Dendritic cell treated with granulocyte-macrophage colony-stimulating factor and Interleukin-4, amounts not matched to agents 40 ng/mL and 50 ng/mL, for 4 days (primary cell): ENCODE measurements at regions of chr19 and their contacts with region 1.

Region 1: GRCh38 chr19:5031231-5032100 is 62.6 kb downstream of the KDM4B start:
- H3K4me3 Mint-ChIP-seq: no peak overlapping the region
- H3K27ac Mint-ChIP-seq: no peak overlapping the region
- H3K4me1 Mint-ChIP-seq: peaks cover 31% of the 10 kb centered on the region
- H3K27me3 Mint-ChIP-seq: no peaks in the 10 kb centered on the region

Region 2: DNA sequence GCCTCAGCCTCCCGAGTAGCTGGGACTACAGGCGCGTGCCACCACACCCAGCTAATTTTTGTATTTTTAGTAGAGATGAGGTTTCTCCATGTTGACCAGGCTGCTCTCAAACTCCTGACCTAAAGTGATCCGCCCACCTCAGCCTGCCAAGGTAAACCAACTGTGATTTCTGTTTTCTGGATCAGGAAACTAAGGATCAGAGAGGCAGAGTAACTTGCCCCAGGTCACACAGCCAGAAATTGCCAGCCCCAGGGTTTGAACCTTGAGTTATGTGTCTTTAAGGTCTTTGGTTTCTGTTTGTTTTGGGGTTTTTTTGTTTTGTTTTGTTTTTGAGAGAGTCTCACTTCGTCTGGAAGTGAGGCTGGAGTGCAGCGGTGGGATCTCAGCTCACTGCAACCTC is 159.8 kb before region 1 on chr19:
- intact Hi-C with region 1: loop called (anchors 1 kb)
- H3K4me3 Mint-ChIP-seq: no peak overlapping the region
- H3K27ac Mint-ChIP-seq: peak overlapping the region; percentile 65
- H3K4me1 Mint-ChIP-seq: peaks cover 50% of the 10 kb centered on the region
- H3K27me3 Mint-ChIP-seq: no peaks in the 10 kb centered on the region

Region 3: GRCh38 chr19:4976401-4977298 is 54.8 kb before region 1 on chr19:
- intact Hi-C with region 1: loop called (anchors 10 kb)
- H3K4me3 Mint-ChIP-seq: peak overlapping the region; percentile 58
- H3K27ac Mint-ChIP-seq: peak overlapping the region; percentile 90
- H3K4me1 Mint-ChIP-seq: peaks cover 89% of the 10 kb centered on the region
- H3K27me3 Mint-ChIP-seq: no peaks in the 10 kb centered on the region

Region 4: DNA sequence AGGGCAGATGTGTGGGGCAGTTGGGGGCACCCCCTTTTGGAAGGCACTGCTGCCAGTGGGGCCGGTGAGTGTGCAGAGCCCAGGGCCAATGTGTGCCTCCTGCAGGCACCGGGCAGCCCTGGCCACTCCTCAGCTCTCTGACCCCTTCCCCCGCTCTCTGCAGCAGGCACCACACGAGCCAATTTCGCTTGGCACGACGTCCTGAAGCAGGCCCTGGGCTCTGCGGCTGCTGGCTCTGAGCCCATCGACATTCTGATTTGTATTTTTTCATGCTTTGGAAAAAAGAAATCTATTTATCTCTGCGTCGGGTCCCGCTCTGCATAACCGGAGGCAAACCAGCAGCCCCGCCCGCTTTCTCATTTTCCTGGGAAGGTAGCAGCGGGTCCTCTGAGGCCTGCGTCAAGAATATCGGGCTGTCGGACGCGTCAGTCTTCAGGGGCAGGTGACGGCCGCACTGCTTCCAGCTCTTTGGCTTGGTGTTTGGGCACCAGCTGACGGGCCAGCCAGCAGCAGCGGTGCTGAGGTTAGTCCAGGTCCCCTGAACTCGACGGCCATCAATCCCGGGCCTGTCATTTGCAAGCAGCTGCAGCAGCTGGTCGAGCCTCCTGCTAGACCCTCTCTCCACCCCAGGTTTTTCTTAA is 71.7 kb after region 1 on chr19:
- intact Hi-C with region 1: no loop called
- H3K4me3 Mint-ChIP-seq: no peak overlapping the region
- H3K27ac Mint-ChIP-seq: no peak overlapping the region
- H3K4me1 Mint-ChIP-seq: no peaks in the 10 kb centered on the region
- H3K27me3 Mint-ChIP-seq: no peaks in the 10 kb centered on the region